Esophagus muscularis mucosa (tissue), 4 donors: ENCODE measurements at regions of chr14 and their contacts with region 1.

Region 1: GRCh38 chr14:61837336-61838229 is 75.4 kb downstream of the SNAPC1 start:
- DNase-seq: no peak
- H3K4me3 ChIP-seq: no peak overlapping the region
- H3K27ac ChIP-seq: no peak overlapping the region
- H3K4me1 ChIP-seq: no peaks in the 10 kb centered on the region
- H3K27me3 ChIP-seq: no peaks in the 10 kb centered on the region
- CTCF ChIP-seq: peak; percentile 93 to 95 (median 95)
- EP300 ChIP-seq: no peak
- POLR2A ChIP-seq: no peak

Region 2: DNA sequence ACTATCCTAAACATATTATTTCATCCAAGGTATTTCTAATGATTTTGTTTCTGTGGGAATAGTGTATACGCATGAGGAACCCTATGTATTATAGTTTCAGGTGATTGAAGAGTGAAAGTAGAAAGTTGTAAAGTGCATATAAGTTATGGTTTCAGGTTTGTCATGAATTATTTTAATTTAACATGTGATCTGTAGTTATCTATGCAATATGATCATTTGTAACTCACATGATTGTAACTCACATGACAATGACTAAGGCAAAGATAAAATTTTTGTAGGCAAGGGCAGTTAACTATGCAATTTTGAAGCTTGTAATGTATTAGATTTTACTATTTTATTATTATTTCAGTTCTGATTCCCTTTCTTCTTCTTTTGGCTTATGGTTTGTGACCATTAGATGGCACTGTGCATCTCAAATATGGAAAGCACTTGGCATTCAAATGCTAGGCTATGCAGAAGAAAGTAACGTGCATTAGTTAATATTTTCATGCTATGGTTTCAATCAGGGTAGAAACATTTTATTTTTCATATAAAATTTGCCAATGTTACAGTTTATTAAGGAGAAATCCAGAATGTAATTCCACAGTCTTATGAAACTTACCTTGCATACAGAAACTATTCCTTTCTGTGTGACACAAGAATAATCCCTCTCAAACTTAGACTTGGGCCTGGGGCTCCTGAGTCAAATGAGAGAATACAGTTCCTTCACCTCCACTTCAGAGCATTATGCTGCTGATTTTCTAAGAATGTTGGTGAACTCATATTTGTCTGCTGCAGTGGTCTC is 540.7 kb before region 1 on chr14:
- intact Hi-C with region 1: loop called (anchors 10 kb)
- DNase-seq: peak; percentile 4
- H3K4me3 ChIP-seq: no peak overlapping the region
- H3K27ac ChIP-seq: no peak overlapping the region
- H3K4me1 ChIP-seq: peaks cover 0 to 4% (median 0%) of the 10 kb centered on the region in 4 donors
- H3K27me3 ChIP-seq: no peaks in the 10 kb centered on the region
- CTCF ChIP-seq: peak; percentile 38 to 57 (median 46)
- EP300 ChIP-seq: no peak
- POLR2A ChIP-seq: no peak

Region 3: DNA sequence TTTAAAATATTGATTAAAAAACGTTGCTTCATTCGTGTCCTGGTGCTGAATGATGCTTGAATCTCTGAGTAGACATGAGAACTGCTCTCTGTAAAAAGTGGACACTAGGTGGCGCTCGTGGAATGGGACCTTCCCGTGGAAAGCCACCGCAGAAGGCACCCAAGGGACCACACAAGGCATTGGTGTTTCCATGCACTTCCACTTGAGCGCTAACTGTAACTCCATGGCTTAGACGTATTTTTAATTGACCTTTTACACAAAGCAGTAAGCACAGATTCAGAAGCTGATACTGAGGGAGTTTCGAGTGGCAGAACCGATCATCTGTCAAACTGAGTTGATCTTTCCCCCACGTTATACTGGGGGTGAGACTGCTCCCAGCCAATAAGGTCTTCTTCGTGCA is 380.9 kb before region 1 on chr14:
- intact Hi-C with region 1: loop called (anchors 1 kb)
- DNase-seq: peak; percentile 96
- H3K4me3 ChIP-seq: no peak overlapping the region
- H3K27ac ChIP-seq: no peak overlapping the region
- H3K4me1 ChIP-seq: peaks cover 0 to 13% (median 10%) of the 10 kb centered on the region in 4 donors
- H3K27me3 ChIP-seq: no peaks in the 10 kb centered on the region
- CTCF ChIP-seq: peak; percentile 80 to 88 (median 86)
- EP300 ChIP-seq: no peak
- POLR2A ChIP-seq: no peak

Region 4: GRCh38 chr14:61761959-61762786 is 75.4 kb before region 1 on chr14 and contains the start of gene SNAPC1:
- intact Hi-C with region 1: loop called (anchors 10 kb)
- DNase-seq: peak; percentile 98
- H3K4me3 ChIP-seq: peak within 1 kb of the TSS; percentile 59 to 91 (median 74)
- H3K27ac ChIP-seq: peak within 1 kb of the TSS; percentile 79 to 85 (median 84)
- H3K4me1 ChIP-seq: peaks cover 14 to 40% (median 38%) of the 10 kb centered on the region in 4 donors
- H3K27me3 ChIP-seq: no peaks in the 10 kb centered on the region
- CTCF ChIP-seq: no peak
- EP300 ChIP-seq: no peak
- POLR2A ChIP-seq: peak; percentile 55
- total RNA-seq, gene SNAPC1: 4.7 to 8.0 (median 6.6) TPM